ENCODE measurements at regions of chr10 and their contacts with region 1.

Region 1: GRCh38 chr10:77907900-77908717 is 18.4 kb downstream of the DLG5 start:
- DNase-seq: peak; percentile 56
- H3K4me3 ChIP-seq: no peak overlapping the region
- H3K4me3 Mint-ChIP-seq: peak overlapping the region; percentile 23
- H3K27ac Mint-ChIP-seq: peak overlapping the region; percentile 99
- H3K4me1 ChIP-seq: peaks cover 58% of the 10 kb centered on the region
- H3K4me1 Mint-ChIP-seq: peaks cover 48% of the 10 kb centered on the region
- H3K27me3 ChIP-seq: no peaks in the 10 kb centered on the region
- H3K27me3 Mint-ChIP-seq: no peaks in the 10 kb centered on the region
- CTCF ChIP-seq: peak; percentile 41 to 58

Region 2: DNA sequence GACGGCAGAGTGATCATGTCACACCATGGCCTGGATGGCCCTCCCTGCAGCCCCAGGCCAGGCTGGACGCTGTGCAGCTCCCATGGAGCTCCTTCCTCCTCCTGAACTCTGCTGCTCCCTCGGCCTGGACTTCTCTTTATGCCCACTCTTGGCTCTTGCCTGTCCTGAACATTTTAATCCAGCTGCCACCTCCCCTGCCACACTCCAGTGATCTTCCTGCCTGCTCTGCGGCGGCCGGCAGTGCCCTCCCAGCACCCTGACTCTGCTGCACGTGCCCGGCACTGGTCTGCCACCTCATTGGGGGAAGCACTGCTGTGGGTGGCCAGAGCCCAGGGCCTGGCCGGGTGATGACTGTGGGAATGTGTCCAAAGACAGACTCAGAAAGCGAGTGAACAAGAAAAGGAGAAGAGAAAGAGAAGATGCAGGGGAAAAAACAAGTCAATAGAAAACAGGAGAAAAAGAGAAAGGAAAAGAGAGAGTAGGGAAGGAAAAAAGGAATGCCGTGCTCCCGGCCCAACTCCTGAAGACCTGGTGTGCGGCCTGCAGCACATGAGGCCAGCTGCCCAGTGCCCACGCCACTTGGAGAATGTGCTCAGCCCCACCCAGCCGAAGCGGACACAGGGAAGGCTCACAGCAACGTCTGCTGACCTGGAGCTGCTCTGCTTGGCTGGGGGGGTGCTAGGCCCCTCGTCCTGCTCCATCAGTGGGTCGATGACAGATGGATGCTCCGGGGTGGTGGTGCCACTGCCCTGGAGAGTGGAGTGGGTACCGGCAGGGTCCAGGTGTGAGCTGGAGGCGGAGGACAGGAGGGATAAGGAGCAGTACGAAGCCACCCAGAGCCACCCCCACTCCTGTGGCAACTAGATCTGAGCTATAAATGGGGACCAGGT is 97.4 kb before region 1 on chr10:
- CTCF ChIA-PET with region 1: no interaction called
- POLR2A ChIA-PET with region 1: no interaction called
- intact Hi-C with region 1: no loop called
- DNase-seq: no peak
- H3K4me3 ChIP-seq: no peak overlapping the region
- H3K4me3 Mint-ChIP-seq: no peak overlapping the region
- H3K27ac Mint-ChIP-seq: peak overlapping the region; percentile 40
- H3K4me1 ChIP-seq: no peaks in the 10 kb centered on the region
- H3K4me1 Mint-ChIP-seq: no peaks in the 10 kb centered on the region
- H3K27me3 ChIP-seq: no peaks in the 10 kb centered on the region
- H3K27me3 Mint-ChIP-seq: no peaks in the 10 kb centered on the region
- CTCF ChIP-seq: no peak

Region 3: GRCh38 chr10:77889277-77889903 is 18.7 kb before region 1 on chr10:
- CTCF ChIA-PET with region 1: interaction called, 5 read pairs
- POLR2A ChIA-PET with region 1: interaction called, 4 read pairs
- intact Hi-C with region 1: loop called (anchors 1 kb)
- DNase-seq: peak; percentile 95
- H3K4me3 ChIP-seq: no peak overlapping the region
- H3K4me3 Mint-ChIP-seq: peak overlapping the region; percentile 59
- H3K27ac Mint-ChIP-seq: peak overlapping the region; percentile 86
- H3K4me1 ChIP-seq: peaks cover 35% of the 10 kb centered on the region
- H3K4me1 Mint-ChIP-seq: peaks cover 72% of the 10 kb centered on the region
- H3K27me3 ChIP-seq: no peaks in the 10 kb centered on the region
- H3K27me3 Mint-ChIP-seq: no peaks in the 10 kb centered on the region
- CTCF ChIP-seq: no peak

Region 4: DNA sequence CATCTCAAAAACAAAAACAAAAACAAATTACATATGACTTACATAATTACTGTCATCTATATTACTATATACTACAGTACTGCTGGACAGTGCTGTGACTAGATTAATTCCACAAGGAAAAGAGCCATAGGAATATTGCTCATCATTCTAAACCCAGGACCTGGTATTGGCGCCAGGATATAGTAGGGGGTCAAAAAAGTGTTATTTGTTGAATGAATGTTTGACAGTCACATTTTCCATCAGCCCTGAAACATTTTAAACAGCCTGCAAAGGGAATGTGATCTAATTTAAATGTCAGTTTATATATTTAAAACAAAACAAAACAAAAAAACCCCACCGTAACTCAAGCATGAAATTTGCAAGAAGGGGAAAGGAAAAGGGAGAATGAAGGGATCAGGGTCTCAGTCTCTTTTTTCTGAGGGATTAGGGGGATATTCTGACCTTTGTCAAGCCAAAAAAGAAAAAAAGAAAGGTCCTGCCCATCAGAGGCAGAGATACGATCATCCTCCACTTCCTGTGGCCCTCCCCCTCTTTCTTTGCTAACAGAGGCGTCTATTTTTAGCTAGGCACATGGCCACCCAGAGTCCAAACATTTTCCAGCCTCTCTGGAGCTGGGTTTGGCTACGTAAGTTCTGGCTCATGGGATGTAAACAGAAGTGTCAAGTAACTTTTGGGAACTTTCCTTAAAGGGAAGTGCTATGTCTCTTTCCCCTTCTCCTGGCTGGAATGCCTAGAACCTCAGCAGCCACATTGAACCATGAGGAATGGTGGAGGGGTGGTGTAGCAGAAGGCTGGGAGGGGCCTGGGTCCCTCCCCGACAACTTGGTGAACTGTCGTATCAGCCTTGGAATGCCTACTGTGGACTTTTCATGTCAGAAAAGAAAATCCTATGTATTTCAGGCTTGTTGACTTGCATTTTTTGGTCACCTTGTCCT is 63.0 kb after region 1 on chr10:
- CTCF ChIA-PET with region 1: no interaction called
- POLR2A ChIA-PET with region 1: no interaction called
- intact Hi-C with region 1: loop called (anchors 2 kb)
- DNase-seq: peak in 1 of 2 experiments; percentile 3
- H3K4me3 ChIP-seq: no peak overlapping the region
- H3K4me3 Mint-ChIP-seq: no peak overlapping the region
- H3K27ac Mint-ChIP-seq: no peak overlapping the region
- H3K4me1 ChIP-seq: peaks cover 6% of the 10 kb centered on the region; the same call in 1 of the 2 replicates
- H3K4me1 Mint-ChIP-seq: no peaks in the 10 kb centered on the region
- H3K27me3 ChIP-seq: no peaks in the 10 kb centered on the region
- H3K27me3 Mint-ChIP-seq: no peaks in the 10 kb centered on the region
- CTCF ChIP-seq: no peak

Region 5: DNA sequence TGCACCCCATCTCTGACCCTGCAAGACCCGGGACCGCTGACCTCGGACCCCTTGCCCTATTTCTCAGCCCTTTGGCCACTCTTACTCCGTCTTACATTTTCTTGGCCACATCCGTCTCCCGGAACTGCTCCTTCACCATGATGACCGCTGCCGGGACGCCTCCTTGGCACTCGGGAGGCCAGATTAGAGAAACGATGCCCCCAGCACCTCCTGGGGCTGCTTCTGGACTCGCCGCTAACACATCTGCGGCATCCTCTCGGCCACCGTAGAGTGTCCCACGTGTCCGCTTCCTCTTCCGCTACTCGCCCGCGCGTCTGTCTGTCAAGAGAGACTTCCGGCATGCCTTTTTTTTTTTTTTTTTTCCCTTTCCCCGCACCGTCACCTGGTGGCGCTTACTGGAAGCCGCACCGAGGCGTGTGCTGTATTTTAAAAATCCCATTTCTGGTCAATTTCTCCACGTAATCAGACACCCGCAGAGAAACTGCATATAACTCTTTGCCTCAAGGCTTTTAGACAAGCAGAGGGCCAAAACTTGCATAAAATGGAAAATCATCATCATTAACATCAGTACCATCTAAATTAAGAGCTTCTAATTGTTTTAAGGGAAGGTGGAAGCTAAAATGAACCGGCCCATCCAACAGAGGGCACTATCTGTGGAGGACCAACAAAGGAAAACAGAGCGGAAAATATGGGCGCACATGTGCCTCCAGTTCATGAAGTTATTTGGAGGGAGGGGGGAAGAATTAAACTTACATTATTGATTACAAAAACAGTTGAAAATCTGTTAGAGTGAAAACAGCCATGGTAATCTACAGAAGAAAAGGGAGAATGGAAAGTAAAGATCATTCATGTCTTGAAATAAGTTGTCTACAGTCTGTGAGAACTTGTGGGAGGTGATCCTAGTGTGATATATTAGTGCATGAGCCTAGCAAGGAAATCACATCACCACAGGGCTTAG is 121.4 kb after region 1 on chr10 and contains the start of gene POLR3A:
- CTCF ChIA-PET with region 1: no interaction called
- POLR2A ChIA-PET with region 1: no interaction called
- intact Hi-C with region 1: loop called (anchors 1 kb)
- DNase-seq: peak; percentile 95 to 98
- H3K4me3 ChIP-seq: peak within 1 kb of the TSS; percentile 75
- H3K4me3 Mint-ChIP-seq: peak within 1 kb of the TSS; percentile 93
- H3K27ac Mint-ChIP-seq: peak within 1 kb of the TSS; percentile 89
- H3K4me1 ChIP-seq: no peaks in the 10 kb centered on the region; the same call in 1 of the 2 replicates
- H3K4me1 Mint-ChIP-seq: peaks cover 5% of the 10 kb centered on the region
- H3K27me3 ChIP-seq: no peaks in the 10 kb centered on the region
- H3K27me3 Mint-ChIP-seq: no peaks in the 10 kb centered on the region
- CTCF ChIP-seq: peak; percentile 78 to 79
- total RNA-seq, gene POLR3A: 25.5 and 29.1 TPM in 2 replicates